Tibial artery (tissue), 4 donors: ENCODE measurements at regions of chr1 and their contacts with region 1.

Region 1: DNA sequence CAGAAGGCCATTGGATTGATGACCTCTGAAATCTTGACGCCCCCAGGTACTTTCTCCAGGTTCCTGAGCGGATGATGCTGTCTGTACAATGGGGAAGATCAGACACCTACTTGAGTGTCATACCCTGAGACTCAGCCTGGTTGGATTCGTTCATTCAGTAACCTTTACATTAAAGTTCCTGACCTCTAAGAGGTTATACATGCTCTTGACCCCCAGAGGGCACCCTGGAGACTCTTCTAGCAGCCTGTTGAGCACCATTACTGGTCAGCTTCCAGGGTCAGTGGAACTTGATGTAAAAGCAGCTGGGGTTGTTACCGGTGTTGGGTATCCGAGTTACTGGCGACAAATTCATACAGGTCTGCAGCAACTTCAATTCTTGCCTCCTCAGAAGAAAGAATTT is 114.3 kb upstream of the ZNF678 start:
- DNase-seq: no peak
- H3K4me3 ChIP-seq: no peak overlapping the region
- H3K27ac ChIP-seq: no peak overlapping the region
- H3K4me1 ChIP-seq: no peaks in the 10 kb centered on the region
- H3K27me3 ChIP-seq: peaks cover 0 to 11% of the 10 kb centered on the region in 2 donors
- CTCF ChIP-seq: no peak

Region 2: GRCh38 chr1:226903819-226904716 is 545.0 kb before region 1 on chr1:
- intact Hi-C with region 1: loop called (anchors 10 kb)
- DNase-seq: peak in 1 of 2 donors; percentile 50
- H3K4me3 ChIP-seq: no peak overlapping the region
- H3K27ac ChIP-seq: no peak overlapping the region
- H3K4me1 ChIP-seq: peaks cover 0 to 10% (median 2%) of the 10 kb centered on the region in 4 donors
- H3K27me3 ChIP-seq: no peaks in the 10 kb centered on the region
- CTCF ChIP-seq: no peak

Region 3: DNA sequence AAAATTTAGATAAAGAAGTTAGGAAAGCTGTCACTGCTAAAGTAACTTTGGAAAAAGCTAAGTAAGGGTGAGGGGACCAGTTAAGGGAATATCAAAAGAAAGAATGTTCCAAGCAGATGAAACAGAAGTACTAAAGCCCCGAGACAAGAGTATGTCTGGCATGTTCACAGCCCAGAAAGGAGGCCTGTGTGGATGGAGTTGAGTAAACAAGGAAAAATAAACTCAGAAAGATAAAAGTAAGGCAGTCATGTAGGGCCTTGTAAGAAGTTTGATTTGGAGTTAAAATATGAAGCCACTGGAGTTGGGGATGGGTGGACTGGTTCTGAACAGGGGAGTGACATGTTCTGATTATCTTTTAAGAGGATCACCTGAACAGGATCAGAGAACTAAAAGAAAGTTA is 308.7 kb before region 1 on chr1:
- intact Hi-C with region 1: loop called (anchors 10 kb)
- DNase-seq: no peak
- H3K4me3 ChIP-seq: no peak overlapping the region
- H3K27ac ChIP-seq: no peak overlapping the region
- H3K4me1 ChIP-seq: no peaks in the 10 kb centered on the region
- H3K27me3 ChIP-seq: no peaks in the 10 kb centered on the region
- CTCF ChIP-seq: no peak